Right ventricle myocardium superior (tissue), 1 donor: ENCODE measurements at regions of chr3 and their contacts with region 1.

Region 1: GRCh38 chr3:40179016-40179415 is 130.5 kb upstream of the EIF1B start:
- DNase-seq: peak; percentile 81
- ATAC-seq: peak; percentile 84

Region 2: DNA sequence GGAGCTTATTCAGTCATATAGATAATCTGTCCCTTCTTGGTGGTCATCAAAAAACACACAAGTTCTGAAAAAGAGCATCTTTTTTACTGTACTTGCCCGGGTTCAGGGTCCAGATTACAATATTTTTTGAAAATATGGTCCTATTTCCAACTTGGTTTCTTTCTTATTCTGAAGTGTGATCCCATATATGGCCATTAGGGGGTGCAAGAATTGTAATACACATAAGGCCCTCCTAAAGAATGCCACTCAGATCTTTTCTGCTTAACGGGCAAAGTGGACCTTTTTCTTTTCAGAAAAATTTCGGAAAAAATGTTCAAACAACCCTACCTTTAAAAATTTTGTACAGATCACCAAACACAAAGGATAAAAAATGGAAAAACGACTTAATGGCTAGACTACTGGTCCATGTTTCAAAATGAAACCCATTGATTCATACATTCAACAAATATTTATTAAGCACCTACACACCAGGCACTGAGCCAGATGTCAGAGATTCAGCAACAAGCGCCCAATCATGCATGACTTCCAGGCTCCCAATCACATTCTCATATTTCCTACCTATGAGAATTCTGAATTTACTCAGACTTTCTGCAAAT is 471.6 kb before region 1 on chr3:
- intact Hi-C with region 1: loop called (anchors 5 kb)
- DNase-seq: no peak
- ATAC-seq: no peak

Region 3: GRCh38 chr3:39724233-39724846 is 454.7 kb before region 1 on chr3:
- intact Hi-C with region 1: loop called (anchors 5 kb)
- DNase-seq: no peak
- ATAC-seq: no peak

Region 4: DNA sequence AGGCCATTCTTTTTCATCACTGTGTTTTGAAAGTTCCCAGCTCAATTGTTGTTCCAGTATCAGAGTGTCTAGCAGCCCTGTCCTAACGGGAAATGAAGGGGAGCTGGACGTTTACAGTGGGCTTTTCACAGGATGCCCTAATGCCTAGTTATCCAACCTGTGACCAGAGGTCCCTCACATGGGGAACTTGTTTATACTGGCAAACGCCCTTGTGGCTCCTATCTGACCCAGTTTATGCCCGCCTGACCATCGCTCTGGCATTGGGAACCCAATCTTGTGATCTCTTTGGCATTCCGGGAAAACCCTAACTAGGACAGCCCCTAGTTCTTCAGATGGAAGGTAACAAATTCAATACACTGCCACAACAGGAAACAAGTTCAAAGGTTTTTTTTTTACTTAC is 384.1 kb before region 1 on chr3:
- intact Hi-C with region 1: loop called (anchors 10 kb)
- DNase-seq: no peak
- ATAC-seq: no peak